ENCODE measurements at regions of chr12 and their contacts with region 1.

Region 1: DNA sequence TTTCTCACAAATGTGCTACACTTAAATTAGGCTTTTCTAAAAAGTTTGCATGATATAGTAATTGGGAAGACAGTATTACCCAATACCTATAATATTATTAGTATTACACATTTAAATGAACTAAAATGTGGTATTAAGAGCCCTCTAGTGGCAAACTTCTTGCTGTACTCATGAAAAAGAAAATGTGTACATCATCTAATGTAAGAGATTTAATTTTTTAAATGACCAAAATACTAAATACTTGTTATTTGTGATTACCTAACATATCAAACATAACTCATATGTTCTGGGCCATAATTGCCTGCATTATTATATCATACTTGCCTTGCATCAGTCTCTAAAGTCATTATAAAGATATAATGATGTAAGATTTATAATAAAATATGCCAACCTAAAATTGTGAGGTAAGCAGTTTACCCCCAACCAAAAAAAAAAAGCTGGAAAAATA is 64.2 kb downstream of the DNAI7 start:
- DNase-seq: no peak
- ATAC-seq: no peak
- H3K4me3 ChIP-seq: no peak overlapping the region
- H3K27ac ChIP-seq: no peak overlapping the region
- H3K4me1 ChIP-seq: no peaks in the 10 kb centered on the region
- H3K27me3 ChIP-seq: no peaks in the 10 kb centered on the region
- CTCF ChIP-seq: peak; percentile 71

Region 2: GRCh38 chr12:24991209-24992049 is 139.3 kb before region 1 on chr12:
- intact Hi-C with region 1: loop called (anchors 2 to 5 kb)
- DNase-seq: no peak
- ATAC-seq: peak; percentile 69 to 86 (median 74)
- H3K4me3 ChIP-seq: no peak overlapping the region
- H3K27ac ChIP-seq: no peak overlapping the region
- H3K4me1 ChIP-seq: no peaks in the 10 kb centered on the region
- H3K27me3 ChIP-seq: no peaks in the 10 kb centered on the region
- CTCF ChIP-seq: peak; percentile 72

Measured in psoas muscle (tissue), 8 donors.